ENCODE measurements at regions of chr19 and their contacts with region 1.

Region 1: GRCh38 chr19:48102870-48103751 is 7.5 kb downstream of the PLA2G4C start:
- DNase-seq: peak; percentile 66
- CTCF ChIP-seq: peak; percentile 46

Region 2: GRCh38 chr19:47652285-47652684 is 450.8 kb before region 1 on chr19:
- in situ Hi-C with region 1: no loop called
- DNase-seq: no peak
- CTCF ChIP-seq: no peak

Region 3: GRCh38 chr19:48152551-48152950 is 49.4 kb after region 1 on chr19:
- in situ Hi-C with region 1: loop called (anchors 10 kb)
- DNase-seq: peak; percentile 80
- CTCF ChIP-seq: peak; percentile 62

Region 4: DNA sequence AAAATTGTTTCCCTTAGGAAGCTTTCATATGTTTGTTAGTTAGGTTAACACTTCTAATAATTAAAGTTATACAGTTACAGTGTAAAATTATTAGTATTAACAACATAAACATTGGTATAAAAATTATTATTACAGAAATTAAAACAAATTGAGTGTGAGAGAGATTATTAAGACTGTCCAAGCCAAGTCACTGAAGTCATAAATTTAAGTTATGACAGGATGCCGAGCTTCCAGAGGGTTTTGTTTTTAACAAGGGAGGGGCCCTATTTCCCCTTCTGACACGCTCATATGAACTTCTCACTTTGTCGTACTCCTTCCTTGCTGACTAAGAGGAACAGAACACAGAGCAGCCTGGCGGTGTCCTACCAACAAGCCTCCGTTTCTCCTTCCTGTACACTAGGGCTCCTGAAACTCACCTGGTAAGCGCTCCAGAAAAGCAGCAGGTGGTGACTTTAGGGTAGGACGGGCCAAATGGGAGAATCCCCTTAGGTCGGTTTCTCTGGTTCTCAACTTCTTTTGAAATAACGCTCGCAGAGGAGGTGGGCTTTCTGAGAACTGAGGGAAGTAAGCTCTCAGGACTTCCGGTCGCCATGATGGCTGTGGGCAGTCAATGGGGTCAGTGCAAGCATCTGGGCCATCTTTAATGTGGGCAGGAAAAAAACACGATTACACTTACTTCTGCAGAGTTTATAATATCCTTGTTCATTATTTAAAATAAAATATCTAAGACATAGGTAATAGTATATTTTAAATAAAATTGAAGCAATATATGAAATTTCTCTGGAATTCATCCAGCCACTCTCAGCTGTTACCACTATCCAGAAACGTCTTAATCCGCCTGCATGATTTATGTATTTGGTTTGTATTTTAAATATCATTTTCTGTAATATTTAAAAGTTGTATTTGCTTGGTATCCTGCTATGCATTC is 152.5 kb after region 1 on chr19 and contains the start of gene CARD8:
- in situ Hi-C with region 1: loop called (anchors 10 kb)
- DNase-seq: peak; percentile 61
- CTCF ChIP-seq: no peak

Measured in GM13976 (cell line).